Breast epithelium (tissue), 4 donors: ENCODE measurements at regions of chr1 and their contacts with region 1.

Region 1: GRCh38 chr1:218735436-218736032 is 390.4 kb downstream of the TGFB2 start:
- DNase-seq: no peak
- H3K4me3 ChIP-seq: no peak overlapping the region
- H3K27ac ChIP-seq: no peak overlapping the region
- H3K4me1 ChIP-seq: no peaks in the 10 kb centered on the region
- H3K27me3 ChIP-seq: no peaks in the 10 kb centered on the region
- CTCF ChIP-seq: no peak
- POLR2A ChIP-seq: no peak

Region 2: DNA sequence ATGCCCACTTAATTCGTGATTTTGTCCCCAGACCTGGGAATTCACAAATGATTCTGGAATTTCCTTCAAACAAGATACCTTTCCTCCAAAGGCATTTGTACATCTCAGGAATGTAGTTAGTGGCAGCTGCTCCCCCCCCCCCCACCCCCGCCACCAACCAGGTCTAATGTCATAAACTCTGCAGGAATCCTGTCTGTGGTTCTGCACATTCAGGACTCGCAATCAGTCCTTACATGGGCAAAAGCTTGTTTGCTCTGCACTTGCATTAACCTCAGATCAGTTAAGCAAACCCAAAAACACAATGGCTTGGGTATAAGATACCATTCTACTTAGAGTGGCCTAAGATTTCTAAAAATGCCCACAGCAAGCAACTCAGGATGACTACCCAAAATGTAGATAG is 246.5 kb before region 1 on chr1:
- intact Hi-C with region 1: loop called (anchors 5 kb)
- DNase-seq: peak in 1 of 2 donors; percentile 21
- H3K4me3 ChIP-seq: no peak overlapping the region
- H3K27ac ChIP-seq: no peak overlapping the region
- H3K4me1 ChIP-seq: no peaks in the 10 kb centered on the region
- H3K27me3 ChIP-seq: no peaks in the 10 kb centered on the region
- CTCF ChIP-seq: no peak
- POLR2A ChIP-seq: no peak